WTC11 (cell line): ENCODE measurements at regions of chr1 and their contacts with region 1.

Region 1: GRCh38 chr1:149942207-149942606 is 5.5 kb upstream of the MTMR11 start:
- DNase-seq: peak; percentile 53
- ATAC-seq: peak; percentile 77
- H3K4me3 Mint-ChIP-seq: no peak overlapping the region
- H3K27ac Mint-ChIP-seq: peak overlapping the region; percentile 49
- H3K4me1 Mint-ChIP-seq: peaks cover 48% of the 10 kb centered on the region
- H3K27me3 Mint-ChIP-seq: no peaks in the 10 kb centered on the region; the same call in 1 of the 2 replicates
- CTCF ChIP-seq: no peak

Region 2: DNA sequence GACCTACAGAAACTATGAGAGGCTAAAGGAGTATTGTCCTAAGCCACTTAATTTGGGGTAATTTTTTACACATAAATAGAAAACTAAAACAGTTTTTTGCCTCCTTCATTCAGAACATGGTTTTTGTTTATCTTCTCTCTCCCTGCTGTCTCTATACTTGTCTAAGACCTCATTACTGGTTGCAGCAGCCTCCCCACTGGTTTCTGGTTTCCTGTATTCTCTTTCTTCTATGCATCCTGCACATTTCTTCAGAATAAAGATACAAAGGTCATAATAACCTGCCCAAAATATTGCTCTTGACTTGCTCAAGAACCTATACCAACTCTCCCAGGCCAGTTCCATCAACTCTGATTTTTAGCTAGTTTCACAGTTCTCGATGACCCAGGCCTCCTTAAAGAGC is 62.7 kb before region 1 on chr1:
- CTCF ChIA-PET with region 1: no interaction called
- POLR2A ChIA-PET with region 1: no interaction called
- DNase-seq: no peak
- ATAC-seq: no peak
- H3K4me3 Mint-ChIP-seq: no peak overlapping the region
- H3K27ac Mint-ChIP-seq: no peak overlapping the region
- H3K4me1 Mint-ChIP-seq: no peaks in the 10 kb centered on the region
- H3K27me3 Mint-ChIP-seq: no peaks in the 10 kb centered on the region
- CTCF ChIP-seq: no peak

Region 3: DNA sequence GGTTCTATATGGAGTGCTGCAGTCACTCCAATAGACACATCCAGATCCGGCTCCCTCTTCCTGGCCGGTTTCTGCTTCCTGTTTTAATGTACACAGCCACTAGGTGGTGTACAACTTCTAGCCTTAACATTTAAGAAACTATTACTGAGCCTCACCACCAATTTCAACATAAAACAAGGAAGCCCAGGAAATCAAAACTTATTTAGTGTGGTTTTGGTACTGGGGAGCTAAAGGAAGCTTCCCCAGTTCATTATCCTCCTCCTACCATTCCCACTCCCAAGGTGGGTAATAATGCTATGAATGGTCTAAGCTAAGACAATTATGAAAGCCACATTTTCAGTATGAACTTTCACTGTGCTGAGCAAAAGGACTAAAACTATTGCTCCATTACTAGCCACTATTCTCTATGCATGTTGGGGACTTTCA is 19.9 kb after region 1 on chr1:
- CTCF ChIA-PET with region 1: interaction called, 10 read pairs
- POLR2A ChIA-PET with region 1: no interaction called
- DNase-seq: peak; percentile 29
- ATAC-seq: peak; percentile 73
- H3K4me3 Mint-ChIP-seq: no peak overlapping the region
- H3K27ac Mint-ChIP-seq: no peak overlapping the region
- H3K4me1 Mint-ChIP-seq: no peaks in the 10 kb centered on the region
- H3K27me3 Mint-ChIP-seq: no peaks in the 10 kb centered on the region
- CTCF ChIP-seq: peak; percentile 56